Breast epithelium (tissue), 4 donors: ENCODE measurements at regions of chr7 and their contacts with region 1.

Region 1: GRCh38 chr7:20021831-20022230 is 195.4 kb downstream of the MACC1 start:
- DNase-seq: no peak
- H3K4me3 ChIP-seq: no peak overlapping the region
- H3K27ac ChIP-seq: no peak overlapping the region
- H3K4me1 ChIP-seq: no peaks in the 10 kb centered on the region
- H3K27me3 ChIP-seq: no peaks in the 10 kb centered on the region
- CTCF ChIP-seq: no peak
- POLR2A ChIP-seq: no peak

Region 2: DNA sequence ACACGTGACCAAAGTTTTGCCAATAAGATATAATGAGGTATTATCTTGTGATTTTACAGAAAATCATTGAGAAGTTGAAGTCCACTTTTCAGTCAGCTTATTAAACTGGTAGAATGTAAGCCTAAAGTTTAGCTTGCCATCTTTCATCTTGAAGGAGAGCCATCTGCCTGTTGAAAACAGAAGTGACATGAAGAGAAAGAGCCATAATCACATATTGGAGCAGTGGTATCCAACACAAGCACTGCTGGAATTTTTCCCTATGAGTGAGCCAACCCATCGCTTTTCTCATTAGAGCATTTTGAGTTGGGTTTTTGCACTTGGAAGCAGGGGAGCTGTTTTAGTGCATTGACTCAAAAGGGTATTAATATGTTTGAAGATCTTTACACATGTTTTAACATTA is 759.0 kb before region 1 on chr7:
- intact Hi-C with region 1: no loop called
- DNase-seq: no peak
- H3K4me3 ChIP-seq: no peak overlapping the region
- H3K27ac ChIP-seq: no peak overlapping the region
- H3K4me1 ChIP-seq: no peaks in the 10 kb centered on the region
- H3K27me3 ChIP-seq: no peaks in the 10 kb centered on the region
- CTCF ChIP-seq: no peak
- POLR2A ChIP-seq: no peak

Region 3: GRCh38 chr7:19964246-19964645 is 57.6 kb before region 1 on chr7:
- intact Hi-C with region 1: no loop called
- DNase-seq: no peak
- H3K4me3 ChIP-seq: no peak overlapping the region
- H3K27ac ChIP-seq: no peak overlapping the region
- H3K4me1 ChIP-seq: no peaks in the 10 kb centered on the region
- H3K27me3 ChIP-seq: no peaks in the 10 kb centered on the region
- CTCF ChIP-seq: no peak
- POLR2A ChIP-seq: no peak

Region 4: GRCh38 chr7:21771906-21772610 is 1750.2 kb after region 1 on chr7:
- intact Hi-C with region 1: loop called (anchors 5 kb)
- DNase-seq: no peak
- H3K4me3 ChIP-seq: no peak overlapping the region
- H3K27ac ChIP-seq: peak overlapping the region in 1 of 2 donors; percentile 26
- H3K4me1 ChIP-seq: peaks cover 0 to 5% of the 10 kb centered on the region in 2 donors
- H3K27me3 ChIP-seq: peaks cover 0 to 5% of the 10 kb centered on the region in 2 donors
- CTCF ChIP-seq: no peak
- POLR2A ChIP-seq: no peak